ENCODE measurements at regions of chr10 and their contacts with region 1.

Region 1: GRCh38 chr10:93074147-93074596 is 479 bp downstream of the CYP26A1 start:
- DNase-seq: peak; percentile 67
- H3K4me3 Mint-ChIP-seq: peak overlapping the region; percentile 75
- H3K27ac Mint-ChIP-seq: peak overlapping the region; percentile 37
- H3K4me1 Mint-ChIP-seq: peaks cover 22% of the 10 kb centered on the region
- H3K27me3 Mint-ChIP-seq: peaks cover 72% of the 10 kb centered on the region

Region 2: DNA sequence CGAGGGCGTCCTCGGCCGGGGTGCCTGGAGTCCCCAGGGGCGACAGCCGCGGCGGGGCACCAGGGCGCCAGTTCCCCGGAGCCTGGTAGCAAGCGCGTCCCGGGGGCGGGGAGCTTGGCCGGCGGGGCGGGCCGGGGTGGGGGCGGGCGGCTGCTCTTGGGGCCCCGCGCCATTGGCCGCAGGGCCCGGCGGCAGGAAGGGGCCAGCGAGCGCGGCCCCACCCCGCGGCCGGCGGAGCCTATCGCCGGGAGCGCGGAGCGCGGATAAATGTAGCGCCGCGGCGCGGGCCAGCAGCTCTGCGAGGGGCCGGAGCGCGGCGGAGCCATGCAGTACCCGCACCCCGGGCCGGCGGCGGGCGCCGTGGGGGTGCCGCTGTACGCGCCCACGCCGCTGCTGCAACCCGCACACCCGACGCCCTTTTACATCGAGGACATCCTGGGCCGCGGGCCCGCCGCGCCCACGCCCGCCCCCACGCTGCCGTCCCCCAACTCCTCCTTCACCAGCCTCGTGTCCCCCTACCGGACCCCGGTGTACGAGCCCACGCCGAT is 384.4 kb before region 1 on chr10 and contains the start of gene HHEX:
- intact Hi-C with region 1: loop called (anchors 5 kb)
- DNase-seq: peak; percentile 78
- H3K4me3 Mint-ChIP-seq: peak within 1 kb of the TSS; percentile 70
- H3K27ac Mint-ChIP-seq: no peak within 1 kb of the TSS
- H3K4me1 Mint-ChIP-seq: peaks cover 16% of the 10 kb centered on the region
- H3K27me3 Mint-ChIP-seq: peaks cover 72% of the 10 kb centered on the region
- total RNA-seq, gene HHEX: 0.19 and 0.31 TPM in 2 replicates

Region 3: GRCh38 chr10:93062514-93063143 is 11.5 kb before region 1 on chr10:
- intact Hi-C with region 1: loop called (anchors 2 kb)
- DNase-seq: peak; percentile 86
- H3K4me3 Mint-ChIP-seq: peak overlapping the region; percentile 80
- H3K27ac Mint-ChIP-seq: no peak overlapping the region
- H3K4me1 Mint-ChIP-seq: peaks cover 9% of the 10 kb centered on the region
- H3K27me3 Mint-ChIP-seq: peaks cover 58% of the 10 kb centered on the region

Region 4: GRCh38 chr10:93566435-93567276 is 492.5 kb after region 1 on chr10 and contains the start of gene FFAR4:
- intact Hi-C with region 1: loop called (anchors 5 kb)
- DNase-seq: no peak
- H3K4me3 Mint-ChIP-seq: no peak within 1 kb of the TSS
- H3K27ac Mint-ChIP-seq: no peak within 1 kb of the TSS
- H3K4me1 Mint-ChIP-seq: no peaks in the 10 kb centered on the region
- H3K27me3 Mint-ChIP-seq: peaks cover 51% of the 10 kb centered on the region
- total RNA-seq, gene FFAR4: not detected in 2 replicates